Psoas muscle (tissue), 8 donors: ENCODE measurements at regions of chr9 and their contacts with region 1.

Region 1: DNA sequence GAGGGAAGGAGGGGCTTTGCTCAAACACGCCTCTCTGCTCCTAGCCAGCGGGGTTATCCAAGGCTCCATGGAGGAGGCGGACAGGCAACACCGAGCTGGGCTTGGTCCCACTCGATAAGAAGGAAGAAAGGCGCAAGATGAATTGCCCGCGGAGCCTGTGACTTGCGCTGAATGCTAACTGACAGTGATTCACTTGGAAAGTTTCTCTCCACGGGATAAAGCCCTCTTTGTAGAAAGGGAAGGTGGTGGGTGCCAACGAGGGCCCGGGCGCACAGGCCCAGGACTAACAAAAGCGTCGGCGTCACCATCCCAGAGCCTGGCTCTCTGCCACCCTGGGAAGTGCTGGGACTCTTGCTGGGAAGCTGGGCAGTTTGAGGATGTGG is 76.0 kb downstream of the VAV2 start:
- DNase-seq: no peak
- ATAC-seq: no peak
- H3K4me3 ChIP-seq: no peak overlapping the region
- H3K27ac ChIP-seq: no peak overlapping the region
- H3K4me1 ChIP-seq: no peaks in the 10 kb centered on the region
- H3K27me3 ChIP-seq: peaks cover 0 to 41% (median 9%) of the 10 kb centered on the region in 3 donors
- CTCF ChIP-seq: no peak

Region 2: GRCh38 chr9:133075925-133076630 is 840.1 kb before region 1 on chr9:
- intact Hi-C with region 1: loop called in 1 of 2 experiments (anchors 10 kb)
- DNase-seq: no peak
- ATAC-seq: no peak
- H3K4me3 ChIP-seq: no peak overlapping the region
- H3K27ac ChIP-seq: no peak overlapping the region
- H3K4me1 ChIP-seq: no peaks in the 10 kb centered on the region
- H3K27me3 ChIP-seq: no peaks in the 10 kb centered on the region
- CTCF ChIP-seq: no peak

Region 3: GRCh38 chr9:133839822-133840329 is 76.3 kb before region 1 on chr9:
- intact Hi-C with region 1: loop called in 1 of 2 experiments (anchors 5 kb)
- DNase-seq: peak in 1 of 2 donors; percentile 63
- ATAC-seq: peak in 1 of 4 donors; percentile 40
- H3K4me3 ChIP-seq: no peak overlapping the region
- H3K27ac ChIP-seq: no peak overlapping the region
- H3K4me1 ChIP-seq: peaks cover 2% of the 10 kb centered on the region
- H3K27me3 ChIP-seq: peaks cover 0 to 34% (median 5%) of the 10 kb centered on the region in 3 donors
- CTCF ChIP-seq: no peak

Region 4: GRCh38 chr9:134365791-134366688 is 449.9 kb after region 1 on chr9:
- intact Hi-C with region 1: no loop called
- DNase-seq: peak; percentile 94 to 96
- ATAC-seq: peak; percentile 77 to 82 (median 78)
- H3K4me3 ChIP-seq: peak overlapping the region; percentile 49
- H3K27ac ChIP-seq: peak overlapping the region; percentile 91
- H3K4me1 ChIP-seq: peaks cover 83% of the 10 kb centered on the region
- H3K27me3 ChIP-seq: no peaks in the 10 kb centered on the region
- CTCF ChIP-seq: no peak